Activated CD4-positive, alpha-beta T cell treated with anti-CD3 and anti-CD28 coated beads, Interleukin-2, amount 10 ng/mL, durations not matched to agents 24 days and 14 days (primary cell): ENCODE measurements at regions of chr5 and their contacts with region 1.

Region 1: GRCh38 chr5:36079200-36079761 is 12.6 kb upstream of the UGT3A2 start:
- DNase-seq: peak; percentile 81
- H3K4me3 Mint-ChIP-seq: no peak overlapping the region
- H3K27ac Mint-ChIP-seq: no peak overlapping the region
- H3K4me1 Mint-ChIP-seq: no peaks in the 10 kb centered on the region
- H3K27me3 Mint-ChIP-seq: peaks cover 30% of the 10 kb centered on the region

Region 2: DNA sequence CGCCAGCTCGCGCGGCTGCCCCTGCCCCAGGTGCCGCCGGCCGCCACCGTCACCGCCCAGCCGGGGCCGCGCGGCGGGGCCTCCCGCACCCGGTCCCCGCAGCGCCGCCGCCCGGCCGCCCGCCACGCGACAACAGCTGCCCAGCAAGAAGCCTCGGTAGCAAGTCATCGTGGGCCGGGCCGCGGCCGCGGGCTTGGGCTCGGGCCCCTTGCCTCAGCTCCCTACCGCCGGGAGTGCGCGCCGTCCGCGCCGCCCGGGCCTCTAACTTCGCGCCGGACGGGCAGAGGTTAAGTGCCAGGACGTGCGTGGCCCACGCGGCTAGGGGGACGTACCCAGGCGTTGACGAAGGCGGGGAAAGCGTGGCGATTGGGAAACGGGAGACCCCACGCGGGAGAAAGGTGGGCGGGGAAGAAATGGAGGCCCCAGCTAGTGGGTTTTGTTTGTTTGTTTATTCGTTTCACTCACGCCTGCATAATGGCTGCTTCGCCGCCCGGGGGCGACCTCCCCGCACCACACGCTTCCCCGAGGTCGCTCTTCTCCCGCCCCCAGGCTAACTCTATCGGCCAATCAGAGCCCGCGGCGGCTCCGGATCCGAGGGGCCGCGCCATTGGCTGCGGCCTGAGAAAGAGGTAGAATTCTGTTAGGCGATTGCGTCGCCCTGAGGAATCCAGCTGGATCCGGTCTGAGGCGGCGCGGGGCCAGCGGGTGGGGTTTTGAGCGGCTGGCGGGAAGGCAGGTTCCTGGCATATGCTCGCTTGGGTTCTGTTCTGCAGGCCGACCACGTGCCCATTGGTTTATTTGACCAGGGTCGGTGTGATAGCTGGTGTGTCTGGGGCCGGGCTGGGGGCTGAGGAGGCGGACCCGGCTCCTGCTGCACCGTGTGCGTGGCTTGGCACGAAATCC is 162.6 kb after region 1 on chr5 and contains the start of gene NADK2:
- intact Hi-C with region 1: loop called (anchors 5 kb)
- DNase-seq: peak; percentile 98
- H3K4me3 Mint-ChIP-seq: peak within 1 kb of the TSS; percentile 87
- H3K27ac Mint-ChIP-seq: peak within 1 kb of the TSS; percentile 94
- H3K4me1 Mint-ChIP-seq: peaks cover 28% of the 10 kb centered on the region
- H3K27me3 Mint-ChIP-seq: peaks cover 7% of the 10 kb centered on the region
- total RNA-seq, gene NADK2: 23.0 and 25.8 TPM in 2 replicates

Region 3: DNA sequence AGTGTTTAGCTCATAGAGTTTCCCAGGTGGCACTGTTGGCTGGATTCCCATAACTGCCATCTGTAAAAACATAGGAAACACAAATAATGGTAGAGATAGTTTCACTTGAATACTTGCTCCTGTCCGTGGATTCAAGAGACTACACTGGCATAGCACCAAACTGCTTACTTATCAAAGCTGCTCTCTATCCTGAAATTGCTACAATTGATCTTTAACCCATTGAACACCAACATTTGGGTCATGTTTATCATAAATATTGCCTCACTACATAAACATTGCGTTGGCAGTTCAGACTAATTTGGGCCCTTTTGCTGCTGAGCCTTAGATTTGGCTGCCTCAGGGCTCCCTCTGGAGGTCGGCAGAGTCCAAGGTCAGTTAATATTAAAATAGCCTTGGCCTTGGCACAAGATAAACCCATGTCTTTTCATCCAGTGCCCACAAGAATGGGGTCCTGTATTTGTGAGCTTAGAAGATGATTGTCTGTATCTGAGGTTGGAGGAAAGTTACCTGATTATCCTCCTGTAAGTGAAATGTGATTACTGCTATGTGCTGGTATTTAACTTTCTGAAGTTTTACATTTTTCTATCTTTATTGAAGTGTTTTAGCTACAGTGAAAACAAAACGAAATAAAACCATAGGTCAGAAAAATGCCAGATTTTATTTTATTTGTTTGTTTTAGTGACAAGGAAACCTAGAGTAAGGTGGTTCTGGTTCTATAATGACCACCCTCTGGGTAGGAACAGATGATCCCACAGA is 226.5 kb after region 1 on chr5:
- intact Hi-C with region 1: loop called (anchors 5 kb)
- DNase-seq: peak; percentile 65
- H3K4me3 Mint-ChIP-seq: no peak overlapping the region
- H3K27ac Mint-ChIP-seq: no peak overlapping the region
- H3K4me1 Mint-ChIP-seq: no peaks in the 10 kb centered on the region
- H3K27me3 Mint-ChIP-seq: peaks cover 17% of the 10 kb centered on the region

Region 4: GRCh38 chr5:36507332-36507952 is 428.2 kb after region 1 on chr5:
- intact Hi-C with region 1: loop called (anchors 1 kb)
- DNase-seq: peak; percentile 91
- H3K4me3 Mint-ChIP-seq: no peak overlapping the region
- H3K27ac Mint-ChIP-seq: no peak overlapping the region
- H3K4me1 Mint-ChIP-seq: peaks cover 2% of the 10 kb centered on the region
- H3K27me3 Mint-ChIP-seq: peaks cover 10% of the 10 kb centered on the region